IMR-90 (cell line): ENCODE measurements at regions of chr2 and their contacts with region 1.

Region 1: GRCh38 chr2:143259368-143259958 is 130.2 kb downstream of the ARHGAP15 start:
- DNase-seq: peak; percentile 73
- ATAC-seq: peak; percentile 92
- H3K4me3 ChIP-seq: peak overlapping the region; percentile 33; the same call in 1 of the 2 replicates
- H3K27ac ChIP-seq: no peak overlapping the region
- H3K4me1 ChIP-seq: 0 out of 2 replicates have a peak, but pooled peaks cover 2% of the 10 kb centered on the region
- H3K27me3 ChIP-seq: peaks cover 6% of the 10 kb centered on the region; the same call in 1 of the 2 replicates
- CTCF ChIP-seq: peak; percentile 86
- POLR2A ChIP-seq: no peak
- RAD21 ChIP-seq: peak; percentile 73

Region 2: GRCh38 chr2:143034292-143035074 is 225.0 kb before region 1 on chr2:
- CTCF ChIA-PET with region 1: interaction called, 3 read pairs
- POLR2A ChIA-PET with region 1: no interaction called
- dilution Hi-C with region 1: no loop called
- in situ Hi-C with region 1: loop called (anchors 10 kb)
- intact Hi-C with region 1: loop called (anchors 1 kb)
- DNase-seq: peak; percentile 82
- ATAC-seq: peak; percentile 97
- H3K4me3 ChIP-seq: no peak overlapping the region
- H3K27ac ChIP-seq: no peak overlapping the region
- H3K4me1 ChIP-seq: no peaks in the 10 kb centered on the region; the same call in 1 of the 2 replicates
- H3K27me3 ChIP-seq: no peaks in the 10 kb centered on the region
- CTCF ChIP-seq: peak; percentile 99
- POLR2A ChIP-seq: no peak
- RAD21 ChIP-seq: peak; percentile 76

Region 3: DNA sequence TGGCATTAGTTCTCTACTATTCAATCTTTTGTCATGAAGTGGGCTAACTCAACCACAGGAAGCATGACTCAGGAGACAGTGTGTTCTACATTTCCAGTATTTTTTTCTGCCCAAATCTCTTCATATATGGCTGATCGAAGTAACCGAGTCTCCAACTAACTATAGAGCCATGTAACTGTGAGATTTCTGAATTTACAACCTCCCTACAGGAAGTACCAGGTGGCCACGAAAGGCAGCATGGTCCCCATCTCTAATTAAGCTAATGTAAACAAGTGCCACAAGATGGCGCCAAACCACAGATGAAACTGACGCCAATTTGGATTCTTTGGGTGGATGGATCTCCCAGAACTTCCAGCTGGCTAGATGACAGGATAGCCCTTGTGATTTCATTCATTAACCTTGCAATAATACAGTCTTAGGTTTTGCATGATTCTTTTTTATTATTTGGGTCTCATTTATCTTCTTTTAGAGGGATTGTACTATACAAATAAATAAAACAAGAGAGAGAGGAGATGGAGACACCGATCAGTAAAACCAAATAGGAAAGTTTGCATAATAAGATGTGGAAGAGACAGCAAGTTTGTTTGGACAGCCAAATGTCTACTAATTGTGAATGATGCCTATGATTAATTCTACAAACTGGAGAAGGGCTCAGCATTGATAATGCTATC is 148.6 kb before region 1 on chr2:
- CTCF ChIA-PET with region 1: interaction called, 4 read pairs
- POLR2A ChIA-PET with region 1: no interaction called
- dilution Hi-C with region 1: no loop called
- in situ Hi-C with region 1: no loop called
- intact Hi-C with region 1: loop called (anchors 1 kb)
- DNase-seq: peak; percentile 50
- ATAC-seq: peak; percentile 72
- H3K4me3 ChIP-seq: no peak overlapping the region
- H3K27ac ChIP-seq: no peak overlapping the region
- H3K4me1 ChIP-seq: no peaks in the 10 kb centered on the region
- H3K27me3 ChIP-seq: peaks cover 3% of the 10 kb centered on the region
- CTCF ChIP-seq: peak; percentile 55
- POLR2A ChIP-seq: no peak
- RAD21 ChIP-seq: peak; percentile 57

Region 4: GRCh38 chr2:143162123-143162837 is 97.2 kb before region 1 on chr2:
- CTCF ChIA-PET with region 1: interaction called, 5 read pairs
- POLR2A ChIA-PET with region 1: no interaction called
- dilution Hi-C with region 1: no loop called
- in situ Hi-C with region 1: no loop called
- intact Hi-C with region 1: loop called (anchors 2 kb)
- DNase-seq: peak; percentile 58
- ATAC-seq: peak; percentile 86
- H3K4me3 ChIP-seq: no peak overlapping the region
- H3K27ac ChIP-seq: no peak overlapping the region
- H3K4me1 ChIP-seq: no peaks in the 10 kb centered on the region
- H3K27me3 ChIP-seq: peaks cover 15% of the 10 kb centered on the region
- CTCF ChIP-seq: peak; percentile 57
- POLR2A ChIP-seq: no peak
- RAD21 ChIP-seq: peak; percentile 62

Region 5: GRCh38 chr2:143171532-143172216 is 87.8 kb before region 1 on chr2:
- CTCF ChIA-PET with region 1: no interaction called
- POLR2A ChIA-PET with region 1: no interaction called
- dilution Hi-C with region 1: no loop called
- in situ Hi-C with region 1: no loop called
- intact Hi-C with region 1: loop called (anchors 2 kb)
- DNase-seq: peak; percentile 16
- ATAC-seq: peak; percentile 68
- H3K4me3 ChIP-seq: no peak overlapping the region
- H3K27ac ChIP-seq: no peak overlapping the region
- H3K4me1 ChIP-seq: no peaks in the 10 kb centered on the region
- H3K27me3 ChIP-seq: no peaks in the 10 kb centered on the region
- CTCF ChIP-seq: peak; percentile 46
- POLR2A ChIP-seq: no peak
- RAD21 ChIP-seq: peak; percentile 34

Region 6: DNA sequence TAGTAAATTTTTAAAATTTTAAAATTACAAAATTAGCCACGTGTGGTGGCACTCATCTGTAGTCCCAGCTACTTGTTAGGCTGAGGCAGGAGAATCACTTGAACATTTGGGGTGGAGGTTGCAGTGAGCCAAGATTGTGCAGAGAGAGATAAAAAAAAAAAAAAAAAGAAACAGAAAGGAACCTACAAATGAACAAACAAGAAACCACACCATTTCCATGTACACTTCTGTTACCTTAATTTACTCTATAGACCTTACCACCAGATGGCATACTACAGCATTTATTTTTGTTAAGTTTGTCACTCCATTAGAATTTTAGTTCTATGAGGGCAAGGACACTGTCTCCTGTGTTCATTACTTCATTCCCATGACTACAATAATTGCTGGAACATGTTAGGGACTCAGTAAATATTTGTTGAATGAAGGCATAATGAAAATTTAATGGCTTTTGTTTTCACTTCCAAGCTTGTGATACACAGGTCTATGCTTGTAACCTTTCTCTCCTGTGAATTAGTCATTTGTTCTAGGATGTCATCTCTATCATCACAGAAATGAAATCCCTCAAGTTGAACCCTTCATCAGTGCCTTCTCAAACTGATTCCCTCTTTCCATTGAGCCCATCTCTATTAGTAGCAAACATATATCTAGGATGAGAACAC is 54.2 kb before region 1 on chr2:
- CTCF ChIA-PET with region 1: interaction called, 3 read pairs
- POLR2A ChIA-PET with region 1: no interaction called
- dilution Hi-C with region 1: no loop called
- in situ Hi-C with region 1: no loop called
- intact Hi-C with region 1: loop called (anchors 1 kb)
- DNase-seq: peak; percentile 8
- ATAC-seq: no peak
- H3K4me3 ChIP-seq: no peak overlapping the region
- H3K27ac ChIP-seq: no peak overlapping the region
- H3K4me1 ChIP-seq: no peaks in the 10 kb centered on the region
- H3K27me3 ChIP-seq: no peaks in the 10 kb centered on the region; the same call in 1 of the 2 replicates
- CTCF ChIP-seq: peak; percentile 35
- POLR2A ChIP-seq: no peak
- RAD21 ChIP-seq: no peak

Region 7: DNA sequence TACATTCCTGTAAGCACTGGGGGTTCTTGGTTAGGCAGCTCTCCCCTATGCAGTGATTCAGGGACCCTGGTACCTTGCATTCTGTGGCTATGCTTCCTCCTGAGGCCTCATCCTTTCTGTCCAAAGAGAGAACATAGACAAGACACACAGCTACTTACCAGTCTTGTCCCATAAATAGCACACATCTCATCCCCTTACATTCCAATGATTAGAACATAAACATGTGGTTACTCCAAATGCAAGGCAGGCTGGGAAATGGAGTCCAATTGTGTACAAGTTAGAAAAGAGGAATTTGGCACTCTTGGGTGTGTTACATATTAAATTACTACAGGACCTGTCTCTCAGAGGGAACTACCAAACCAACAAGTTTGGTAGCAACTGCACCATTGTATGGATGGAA is 41.1 kb after region 1 on chr2:
- CTCF ChIA-PET with region 1: no interaction called
- POLR2A ChIA-PET with region 1: no interaction called
- dilution Hi-C with region 1: no loop called
- in situ Hi-C with region 1: no loop called
- intact Hi-C with region 1: no loop called
- DNase-seq: peak; percentile 70
- ATAC-seq: peak; percentile 94
- H3K4me3 ChIP-seq: no peak overlapping the region
- H3K27ac ChIP-seq: no peak overlapping the region
- H3K4me1 ChIP-seq: peaks cover 2% of the 10 kb centered on the region; the same call in 1 of the 2 replicates
- H3K27me3 ChIP-seq: no peaks in the 10 kb centered on the region
- CTCF ChIP-seq: no peak
- POLR2A ChIP-seq: no peak
- RAD21 ChIP-seq: no peak